ENCODE measurements at regions of chr1 and their contacts with region 1.

Region 1: GRCh38 chr1:118294875-118295642 is 110.0 kb upstream of the SPAG17 start:
- DNase-seq: peak in 1 of 2 donors; percentile 53
- ATAC-seq: peak; percentile 23 to 46 (median 34)
- H3K4me3 ChIP-seq: no peak overlapping the region
- H3K27ac ChIP-seq: peak overlapping the region; percentile 88
- H3K4me1 ChIP-seq: peaks cover 82% of the 10 kb centered on the region
- H3K27me3 ChIP-seq: no peaks in the 10 kb centered on the region
- CTCF ChIP-seq: no peak

Region 2: DNA sequence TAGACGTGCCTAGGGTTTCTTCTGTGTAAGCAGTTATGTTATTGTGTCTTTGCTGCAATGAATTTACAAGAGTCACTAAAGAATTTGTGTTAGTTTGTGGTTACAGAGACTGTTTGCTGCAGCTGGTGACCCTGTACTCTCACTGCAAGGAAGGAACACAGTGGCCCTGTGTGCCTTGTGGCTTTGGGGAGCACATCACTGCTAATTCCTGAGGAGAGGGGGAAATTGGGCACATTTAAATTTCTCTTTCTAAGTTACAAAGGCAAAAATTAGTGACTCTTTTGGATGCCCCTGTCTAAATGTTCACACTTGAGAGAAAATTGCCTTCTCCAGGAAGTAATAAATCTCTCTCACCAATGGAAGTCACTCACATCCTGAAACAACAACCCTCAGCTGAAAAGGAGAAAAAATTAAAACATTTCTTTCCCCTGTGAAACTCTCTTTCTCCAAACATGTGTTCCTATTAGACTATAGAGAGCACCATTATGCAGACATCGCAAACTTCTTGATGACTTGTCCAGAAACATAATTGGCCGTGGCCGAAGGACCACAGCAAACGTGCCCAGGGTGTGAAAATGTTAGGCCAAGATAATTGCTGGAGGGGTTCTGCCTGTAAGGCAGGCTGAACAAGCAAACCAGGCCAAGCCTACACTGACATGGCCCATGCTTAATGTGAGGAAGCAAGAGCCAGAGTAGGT is 77.8 kb before region 1 on chr1:
- intact Hi-C with region 1: no loop called
- DNase-seq: no peak
- ATAC-seq: no peak
- H3K4me3 ChIP-seq: no peak overlapping the region
- H3K27ac ChIP-seq: no peak overlapping the region
- H3K4me1 ChIP-seq: no peaks in the 10 kb centered on the region
- H3K27me3 ChIP-seq: no peaks in the 10 kb centered on the region
- CTCF ChIP-seq: no peak

Region 3: DNA sequence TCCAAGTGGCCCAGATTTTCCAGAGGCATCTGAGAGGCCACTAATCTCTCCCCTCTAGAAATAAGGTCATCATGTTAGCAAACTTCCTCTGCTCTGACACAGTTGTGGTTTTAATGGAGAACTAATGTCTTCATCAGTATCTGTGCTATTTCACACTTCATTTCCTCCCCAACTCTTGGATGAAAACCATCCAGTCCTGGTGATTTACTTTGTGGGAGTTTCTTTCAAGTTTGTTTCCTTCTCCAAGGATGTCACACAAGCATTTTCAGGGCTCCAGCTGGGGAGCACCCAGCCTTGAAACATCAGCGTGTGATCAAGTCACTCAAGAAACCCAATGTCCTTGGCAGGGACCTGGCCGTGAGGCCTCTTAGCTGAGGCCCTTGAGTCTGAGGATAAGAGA is 654.3 kb after region 1 on chr1:
- intact Hi-C with region 1: loop called in 1 of 2 experiments (anchors 10 kb)
- DNase-seq: peak; percentile 34 to 82
- ATAC-seq: peak; percentile 43 to 55 (median 52)
- H3K4me3 ChIP-seq: no peak overlapping the region
- H3K27ac ChIP-seq: peak overlapping the region; percentile 79
- H3K4me1 ChIP-seq: peaks cover 97% of the 10 kb centered on the region
- H3K27me3 ChIP-seq: no peaks in the 10 kb centered on the region
- CTCF ChIP-seq: no peak

Measured in psoas muscle (tissue), 8 donors.